Caco-2 (cell line): ENCODE measurements at regions of chr16 and their contacts with region 1.

Region 1: DNA sequence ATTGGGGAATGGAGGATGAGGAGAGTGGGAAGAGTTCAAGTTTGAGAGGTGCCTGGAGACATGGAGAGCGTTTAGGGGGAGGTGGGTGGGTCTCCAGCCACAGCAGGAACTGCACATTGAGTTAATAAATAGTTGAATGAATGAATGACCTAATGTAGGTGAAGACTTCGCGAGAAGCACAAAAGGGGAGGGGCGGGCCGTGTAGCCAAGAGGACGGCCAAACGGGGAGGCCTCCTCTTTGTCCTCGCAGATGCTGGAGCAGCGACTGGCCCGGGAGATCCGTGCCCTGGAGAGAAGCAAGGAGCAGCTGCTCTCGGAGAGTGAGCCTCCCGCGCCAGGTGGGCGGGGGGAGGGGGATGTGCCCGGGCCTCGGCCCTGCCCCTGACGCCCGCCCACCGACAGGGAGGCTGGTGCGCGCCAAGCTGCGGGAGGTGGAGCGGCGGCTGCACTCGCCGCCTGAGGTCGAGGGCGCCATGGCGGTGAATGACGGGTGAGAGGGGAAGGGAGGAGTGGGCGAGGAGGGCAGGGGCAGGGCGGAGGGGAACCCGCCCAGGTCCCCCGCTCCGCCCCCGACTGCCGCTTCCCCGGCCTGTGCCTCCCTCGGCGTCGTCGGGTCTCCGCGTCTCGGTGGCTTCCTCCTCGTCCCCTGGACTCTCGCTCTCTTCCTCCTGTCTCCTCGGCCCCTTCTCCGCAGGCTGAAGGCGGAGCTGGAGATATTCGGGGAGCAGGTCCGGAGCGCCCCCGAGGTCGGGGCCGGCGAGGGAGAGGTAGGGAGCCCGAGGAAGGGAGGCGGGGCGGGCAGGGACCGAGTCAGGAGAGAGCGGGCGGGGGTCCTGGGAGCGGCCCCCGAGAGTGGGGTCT is 12.9 kb downstream of the SYCE1L start:
- DNase-seq: peak; percentile 87 to 91
- H3K4me3 ChIP-seq: peak overlapping the region; percentile 60
- H3K4me3 Mint-ChIP-seq: peak overlapping the region; percentile 75
- H3K27ac Mint-ChIP-seq: peak overlapping the region; percentile 23
- H3K4me1 ChIP-seq: no peaks in the 10 kb centered on the region; the same call in 1 of the 2 replicates
- H3K4me1 Mint-ChIP-seq: peaks cover 7% of the 10 kb centered on the region
- H3K27me3 ChIP-seq: no peaks in the 10 kb centered on the region
- H3K27me3 Mint-ChIP-seq: no peaks in the 10 kb centered on the region
- CTCF ChIP-seq: peak in 1 of 2 experiments; percentile 18

Region 2: DNA sequence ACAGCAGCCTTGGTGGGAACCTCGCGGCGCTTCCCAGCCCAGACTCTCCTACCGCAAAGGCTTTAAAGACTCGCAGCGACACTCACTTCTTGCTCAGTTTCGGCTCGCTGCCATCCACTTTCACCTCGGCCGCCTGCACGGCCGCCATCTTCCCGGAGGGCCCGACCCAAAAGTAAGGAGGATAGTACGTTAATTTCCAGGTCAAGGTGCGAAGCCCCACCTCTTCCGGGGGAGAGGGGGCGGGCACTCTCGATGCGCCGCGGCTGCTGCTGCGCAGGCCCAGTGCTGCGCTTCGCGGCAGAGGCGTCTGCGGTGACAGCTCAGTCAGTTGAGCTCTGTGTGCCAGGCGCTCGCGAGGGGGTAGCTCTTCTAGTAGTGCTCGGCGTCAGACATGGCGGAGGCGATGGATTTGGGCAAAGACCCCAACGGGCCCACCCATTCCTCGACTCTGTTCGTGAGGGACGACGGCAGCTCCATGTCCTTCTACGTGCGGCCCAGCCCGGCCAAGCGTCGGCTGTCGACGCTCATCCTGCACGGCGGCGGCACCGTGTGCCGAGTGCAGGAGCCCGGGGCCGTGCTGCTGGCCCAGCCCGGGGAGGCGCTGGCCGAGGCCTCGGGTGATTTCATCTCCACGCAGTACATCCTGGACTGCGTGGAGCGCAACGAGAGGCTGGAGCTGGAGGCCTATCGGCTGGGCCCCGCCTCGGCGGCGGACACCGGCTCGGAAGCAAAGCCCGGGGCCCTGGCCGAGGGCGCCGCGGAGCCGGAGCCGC is 1564.4 kb before region 1 on chr16 and contains the starts of genes KARS1 and TERF2IP:
- CTCF ChIA-PET with region 1: no interaction called
- POLR2A ChIA-PET with region 1: no interaction called
- intact Hi-C with region 1: loop called (anchors 2 kb)
- DNase-seq: peak; percentile 93 to 95
- H3K4me3 ChIP-seq: peak within 1 kb of the TSS; percentile 97
- H3K4me3 Mint-ChIP-seq: peak within 1 kb of the TSS; percentile 91
- H3K27ac Mint-ChIP-seq: peak within 1 kb of the TSS; percentile 98
- H3K4me1 ChIP-seq: peaks cover 12% of the 10 kb centered on the region
- H3K4me1 Mint-ChIP-seq: peaks cover 18% of the 10 kb centered on the region
- H3K27me3 ChIP-seq: no peaks in the 10 kb centered on the region
- H3K27me3 Mint-ChIP-seq: no peaks in the 10 kb centered on the region
- CTCF ChIP-seq: no peak
- total RNA-seq, gene KARS1: 244 and 245 TPM in 2 replicates
- total RNA-seq, gene TERF2IP: 25.1 and 27.1 TPM in 2 replicates

Region 3: GRCh38 chr16:77169650-77170236 is 42.4 kb before region 1 on chr16:
- CTCF ChIA-PET with region 1: no interaction called
- POLR2A ChIA-PET with region 1: no interaction called
- intact Hi-C with region 1: no loop called
- DNase-seq: peak; percentile 41 to 62
- H3K4me3 ChIP-seq: no peak overlapping the region
- H3K4me3 Mint-ChIP-seq: no peak overlapping the region
- H3K27ac Mint-ChIP-seq: no peak overlapping the region
- H3K4me1 ChIP-seq: no peaks in the 10 kb centered on the region
- H3K4me1 Mint-ChIP-seq: no peaks in the 10 kb centered on the region
- H3K27me3 ChIP-seq: no peaks in the 10 kb centered on the region
- H3K27me3 Mint-ChIP-seq: peaks cover 19% of the 10 kb centered on the region
- CTCF ChIP-seq: peak; percentile 78 to 80

Region 4: DNA sequence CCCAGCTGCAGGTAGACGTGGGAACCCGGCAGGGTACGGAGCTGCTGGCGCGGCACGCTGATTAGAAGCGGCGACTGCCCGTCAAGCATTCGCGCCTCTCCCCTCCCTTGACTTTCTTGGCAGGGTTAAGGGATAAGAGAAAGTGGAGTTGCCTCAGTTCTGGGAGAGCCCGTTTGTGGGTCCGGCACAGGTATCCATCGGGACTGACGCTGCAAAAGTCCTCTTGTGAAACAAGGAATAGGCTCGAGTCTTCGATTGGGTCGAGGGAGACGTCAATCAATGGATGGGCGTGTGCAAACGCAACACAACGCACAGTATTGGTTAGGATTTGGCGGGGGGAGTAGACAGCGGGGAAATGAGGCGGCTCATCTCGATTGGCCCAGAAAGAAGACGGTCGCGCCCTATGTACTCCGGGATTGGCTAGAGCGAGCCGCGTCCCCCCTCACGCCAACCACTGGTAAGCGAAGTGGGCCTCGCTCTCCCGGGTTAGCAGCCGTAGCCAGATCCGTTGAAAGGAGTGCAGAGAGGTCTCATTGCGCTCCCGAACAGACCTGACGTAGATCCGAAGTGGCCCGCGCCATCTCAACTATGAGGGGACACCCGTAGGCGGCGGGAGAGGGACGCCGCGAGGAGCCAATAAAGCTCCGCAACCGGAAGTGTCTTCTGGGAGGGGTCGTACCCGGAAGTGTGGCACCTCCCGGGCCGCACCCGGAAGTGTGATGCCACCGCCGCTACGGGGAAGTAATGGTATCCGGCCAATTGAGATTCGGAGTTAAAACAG is 21.4 kb before region 1 on chr16 and contains the start of gene MON1B:
- CTCF ChIA-PET with region 1: no interaction called
- POLR2A ChIA-PET with region 1: interaction called, 5 read pairs
- intact Hi-C with region 1: loop called (anchors 1 kb)
- DNase-seq: peak; percentile 98 to 99
- H3K4me3 ChIP-seq: peak within 1 kb of the TSS; percentile 88
- H3K4me3 Mint-ChIP-seq: peak within 1 kb of the TSS; percentile 84
- H3K27ac Mint-ChIP-seq: peak within 1 kb of the TSS; percentile 100
- H3K4me1 ChIP-seq: peaks cover 8% of the 10 kb centered on the region
- H3K4me1 Mint-ChIP-seq: peaks cover 19% of the 10 kb centered on the region
- H3K27me3 ChIP-seq: no peaks in the 10 kb centered on the region
- H3K27me3 Mint-ChIP-seq: peaks cover 3% of the 10 kb centered on the region
- CTCF ChIP-seq: peak in 1 of 2 experiments; percentile 11
- total RNA-seq, gene MON1B: 66.9 and 67.1 TPM in 2 replicates